PC-3 (cell line): ENCODE measurements at regions of chr1 and their contacts with region 1.

Region 1: GRCh38 chr1:20786253-20787028 is 666 bp downstream of the HP1BP3 start:
- DNase-seq: peak; percentile 95
- ATAC-seq: peak; percentile 68
- H3K4me3 ChIP-seq: peak overlapping the region; percentile 98
- H3K27ac ChIP-seq: peak overlapping the region; percentile 71
- H3K4me1 ChIP-seq: peaks cover 26% of the 10 kb centered on the region
- H3K27me3 ChIP-seq: no peaks in the 10 kb centered on the region
- CTCF ChIP-seq: no peak

Region 2: DNA sequence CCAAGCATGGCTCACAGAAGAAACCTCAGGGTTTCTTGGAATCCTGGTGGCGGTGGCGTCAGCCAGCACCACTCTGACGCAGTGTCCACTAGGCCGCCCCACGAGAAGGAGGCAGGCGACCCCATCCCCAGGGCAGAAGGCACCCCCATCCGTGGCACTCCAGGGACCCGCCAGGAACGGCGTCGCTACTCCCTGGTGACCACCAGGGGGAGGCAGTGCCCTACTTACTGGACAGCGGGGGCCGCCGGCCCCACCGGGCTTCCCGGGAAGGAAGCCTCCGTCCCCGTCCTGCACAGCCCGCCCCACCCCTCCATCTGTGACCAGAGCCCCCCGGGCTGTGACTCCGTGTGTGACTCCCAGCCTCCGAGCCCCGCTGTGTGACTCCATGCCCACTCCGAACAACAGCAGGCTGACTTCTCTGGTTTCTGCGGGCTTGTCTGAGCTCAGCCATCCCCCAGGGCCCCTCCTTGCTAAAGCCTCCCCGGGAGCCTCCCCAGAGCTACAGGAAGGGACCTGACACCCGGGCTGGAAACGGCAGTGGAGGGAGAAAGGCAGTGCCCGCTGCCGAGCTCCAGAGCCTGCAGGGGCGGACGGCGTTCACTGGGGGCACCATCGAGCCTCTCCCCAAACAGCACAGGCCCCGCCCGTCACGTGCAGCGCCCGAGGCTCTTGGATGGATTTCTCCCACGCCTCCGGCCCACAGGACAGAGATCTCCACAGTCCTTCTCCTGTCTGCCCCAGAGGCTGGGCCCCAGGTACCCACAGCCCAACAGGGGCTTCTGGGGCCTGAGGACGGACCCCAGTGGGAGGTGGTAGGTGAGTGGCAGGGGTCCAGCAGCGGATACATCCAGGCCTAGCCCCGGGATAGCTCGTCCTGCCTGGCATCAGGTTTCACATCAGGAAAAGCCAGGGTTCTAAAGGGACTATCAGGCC is 89.8 kb before region 1 on chr1:
- CTCF ChIA-PET with region 1: interaction called, 9 read pairs
- POLR2A ChIA-PET with region 1: no interaction called
- intact Hi-C with region 1: loop called (anchors 5 kb)
- DNase-seq: peak; percentile 89
- ATAC-seq: peak; percentile 91
- H3K4me3 ChIP-seq: peak overlapping the region; percentile 72
- H3K27ac ChIP-seq: peak overlapping the region; percentile 78
- H3K4me1 ChIP-seq: peaks cover 22% of the 10 kb centered on the region
- H3K27me3 ChIP-seq: no peaks in the 10 kb centered on the region
- CTCF ChIP-seq: peak; percentile 80

Region 3: DNA sequence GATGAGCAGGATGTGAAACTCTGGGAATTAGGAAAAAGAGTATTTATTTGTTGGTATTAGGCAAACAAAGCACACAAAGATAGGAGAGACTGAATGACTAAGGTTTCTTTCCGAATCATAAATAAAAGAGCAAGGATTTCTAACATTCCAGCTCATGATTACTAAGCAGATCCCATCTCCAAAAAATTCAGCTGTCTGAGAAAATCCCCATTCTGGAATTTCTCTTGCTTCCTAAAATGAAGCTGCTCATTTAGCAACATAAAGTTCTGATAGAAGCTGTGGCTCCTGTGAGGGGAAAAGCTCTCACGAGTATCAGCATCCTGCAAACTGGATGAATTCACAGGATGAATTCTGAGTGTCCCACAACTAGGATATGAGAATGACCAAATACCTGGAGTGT is 47.2 kb before region 1 on chr1:
- CTCF ChIA-PET with region 1: no interaction called
- POLR2A ChIA-PET with region 1: no interaction called
- intact Hi-C with region 1: no loop called
- DNase-seq: peak; percentile 81
- ATAC-seq: peak; percentile 72
- H3K4me3 ChIP-seq: no peak overlapping the region
- H3K27ac ChIP-seq: peak overlapping the region; percentile 95
- H3K4me1 ChIP-seq: peaks cover 35% of the 10 kb centered on the region
- H3K27me3 ChIP-seq: no peaks in the 10 kb centered on the region
- CTCF ChIP-seq: no peak

Region 4: DNA sequence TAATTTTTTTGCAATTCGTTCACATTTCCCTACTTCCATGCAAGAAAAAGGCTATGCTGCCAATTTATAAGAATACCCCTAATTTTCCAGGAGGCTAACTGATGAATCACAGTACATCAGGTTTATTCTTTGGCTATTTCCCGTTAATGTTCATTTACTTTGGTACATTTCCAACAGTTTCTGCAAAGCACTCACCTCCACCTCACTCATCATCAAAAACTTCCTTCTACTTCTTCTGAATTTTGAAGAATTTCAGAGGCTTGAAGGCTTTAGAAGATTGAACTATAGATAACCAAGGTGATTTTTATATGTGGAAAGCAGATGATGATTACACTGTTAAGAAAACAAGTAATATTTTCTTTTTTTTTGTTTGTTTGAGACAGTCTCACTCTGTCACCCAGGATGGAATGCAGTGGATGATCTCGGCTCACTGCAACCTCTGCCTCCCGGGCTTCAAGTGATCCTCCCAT is 61.2 kb after region 1 on chr1:
- CTCF ChIA-PET with region 1: no interaction called
- POLR2A ChIA-PET with region 1: no interaction called
- intact Hi-C with region 1: loop called (anchors 2 kb)
- DNase-seq: peak; percentile 89
- ATAC-seq: peak; percentile 83
- H3K4me3 ChIP-seq: no peak overlapping the region
- H3K27ac ChIP-seq: peak overlapping the region; percentile 85
- H3K4me1 ChIP-seq: peaks cover 28% of the 10 kb centered on the region
- H3K27me3 ChIP-seq: no peaks in the 10 kb centered on the region
- CTCF ChIP-seq: no peak

Region 5: DNA sequence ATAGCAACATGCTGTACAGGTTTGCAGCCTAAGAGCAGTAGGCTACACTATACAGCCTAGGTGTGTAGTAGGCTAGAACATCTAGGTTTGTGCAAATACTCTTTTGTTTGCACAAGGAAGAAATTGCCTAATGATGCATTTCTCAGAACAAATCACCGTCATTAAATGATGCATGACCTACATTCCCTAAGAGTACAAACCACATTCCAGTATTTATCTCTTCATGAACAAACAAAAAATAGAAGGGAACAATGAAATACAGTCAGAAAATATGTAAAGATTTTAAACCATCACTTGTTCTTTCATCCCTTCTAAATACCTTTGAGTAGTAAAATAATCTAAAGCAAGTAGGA is 110.4 kb after region 1 on chr1:
- CTCF ChIA-PET with region 1: no interaction called
- POLR2A ChIA-PET with region 1: no interaction called
- intact Hi-C with region 1: loop called (anchors 5 kb)
- DNase-seq: peak; percentile 91
- ATAC-seq: peak; percentile 97
- H3K4me3 ChIP-seq: no peak overlapping the region
- H3K27ac ChIP-seq: peak overlapping the region; percentile 86
- H3K4me1 ChIP-seq: peaks cover 15% of the 10 kb centered on the region
- H3K27me3 ChIP-seq: no peaks in the 10 kb centered on the region
- CTCF ChIP-seq: no peak

Region 6: GRCh38 chr1:21200767-21201166 is 414.3 kb after region 1 on chr1:
- CTCF ChIA-PET with region 1: no interaction called
- POLR2A ChIA-PET with region 1: no interaction called
- intact Hi-C with region 1: loop called (anchors 5 kb)
- DNase-seq: peak; percentile 15
- ATAC-seq: no peak
- H3K4me3 ChIP-seq: no peak overlapping the region
- H3K27ac ChIP-seq: no peak overlapping the region
- H3K4me1 ChIP-seq: no peaks in the 10 kb centered on the region
- H3K27me3 ChIP-seq: no peaks in the 10 kb centered on the region
- CTCF ChIP-seq: no peak